ENCODE measurements at regions of chr9 and their contacts with region 1.

Region 1: GRCh38 chr9:137423004-137423874 is at the starts of genes EXD3 and NOXA1:
- DNase-seq: peak; percentile 91
- H3K4me3 Mint-ChIP-seq: peak within 1 kb of the TSS; percentile 88
- H3K27ac Mint-ChIP-seq: peak within 1 kb of the TSS; percentile 49
- H3K4me1 Mint-ChIP-seq: peaks cover 10% of the 10 kb centered on the region
- H3K27me3 Mint-ChIP-seq: peaks cover 4% of the 10 kb centered on the region
- total RNA-seq, gene EXD3: 6.8 and 8.0 TPM in 2 replicates
- total RNA-seq, gene NOXA1: 0.39 and 0.46 TPM in 2 replicates

Region 2: DNA sequence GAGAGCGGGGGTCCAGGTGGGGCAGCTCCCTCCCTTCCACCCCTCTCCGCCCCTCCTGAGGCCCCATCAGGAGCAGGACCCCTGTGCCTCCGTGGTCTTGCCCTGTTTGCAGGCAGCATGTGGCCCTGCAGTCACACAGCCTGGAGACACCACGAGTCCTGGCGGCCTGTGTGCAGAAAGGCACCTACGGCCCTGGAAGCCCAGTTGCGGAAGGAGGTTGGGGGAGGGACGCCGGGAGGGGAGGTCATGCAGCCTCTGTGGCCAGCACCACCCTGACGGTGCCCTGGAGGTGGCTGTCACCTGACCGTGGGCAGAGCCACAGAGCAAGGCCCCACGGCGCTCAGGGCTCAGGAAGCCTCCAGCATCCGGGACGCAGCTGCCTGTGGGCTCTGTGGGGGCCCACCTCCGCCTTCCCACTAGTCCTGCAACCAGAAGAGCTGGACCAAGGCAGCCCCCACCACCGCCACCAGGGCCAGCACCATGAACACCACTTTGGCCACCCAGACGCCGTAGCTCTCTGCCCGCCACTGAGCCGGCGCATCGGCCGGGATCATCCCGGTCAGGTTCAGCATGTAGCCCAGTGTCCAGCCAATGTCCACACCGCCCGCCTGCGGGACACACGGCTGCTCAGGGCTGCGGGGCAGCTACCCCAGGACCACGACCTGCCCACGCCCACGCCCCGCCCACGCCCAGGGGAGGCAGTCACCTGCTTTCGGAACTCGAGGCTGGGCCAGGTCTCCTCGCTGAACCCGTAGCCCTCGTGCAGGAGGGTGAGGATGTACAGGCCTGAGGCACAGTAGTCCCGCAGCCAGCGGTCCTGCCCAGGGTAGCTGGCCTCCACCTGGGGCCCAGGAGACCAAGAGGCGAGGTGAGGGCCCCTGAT is 11.5 kb after region 1 on chr9:
- intact Hi-C with region 1: no loop called
- DNase-seq: no peak
- H3K4me3 Mint-ChIP-seq: no peak overlapping the region
- H3K27ac Mint-ChIP-seq: no peak overlapping the region
- H3K4me1 Mint-ChIP-seq: no peaks in the 10 kb centered on the region
- H3K27me3 Mint-ChIP-seq: no peaks in the 10 kb centered on the region

Region 3: DNA sequence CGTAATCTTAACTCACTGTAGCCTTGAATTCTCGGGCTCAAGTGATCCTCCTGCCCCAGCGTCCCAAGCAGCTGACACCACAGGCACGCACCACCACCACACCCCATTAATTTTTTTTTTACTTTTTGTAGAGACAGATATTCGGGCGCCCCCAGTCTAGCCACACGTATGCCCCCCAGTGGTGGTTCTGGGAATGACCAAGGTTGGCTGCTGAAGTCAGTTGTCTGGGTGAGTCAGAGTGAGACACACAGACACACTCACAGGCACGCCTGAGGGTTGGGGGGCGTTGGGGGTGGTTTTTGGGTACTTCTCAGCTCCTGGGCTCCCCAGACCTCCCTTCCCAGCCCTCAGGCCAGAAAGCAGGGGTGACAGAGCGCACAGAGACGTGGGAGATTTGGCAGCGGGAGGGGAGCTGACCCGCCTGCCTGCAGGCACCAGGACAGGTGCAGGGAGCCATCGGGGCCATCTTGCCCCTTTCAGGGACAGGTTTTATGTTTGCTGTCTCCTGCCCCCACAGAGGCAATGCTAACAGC is 22.1 kb after region 1 on chr9:
- intact Hi-C with region 1: loop called (anchors 2 kb)
- DNase-seq: peak; percentile 80
- H3K4me3 Mint-ChIP-seq: no peak overlapping the region
- H3K27ac Mint-ChIP-seq: no peak overlapping the region
- H3K4me1 Mint-ChIP-seq: peaks cover 13% of the 10 kb centered on the region
- H3K27me3 Mint-ChIP-seq: peaks cover 11% of the 10 kb centered on the region

Region 4: DNA sequence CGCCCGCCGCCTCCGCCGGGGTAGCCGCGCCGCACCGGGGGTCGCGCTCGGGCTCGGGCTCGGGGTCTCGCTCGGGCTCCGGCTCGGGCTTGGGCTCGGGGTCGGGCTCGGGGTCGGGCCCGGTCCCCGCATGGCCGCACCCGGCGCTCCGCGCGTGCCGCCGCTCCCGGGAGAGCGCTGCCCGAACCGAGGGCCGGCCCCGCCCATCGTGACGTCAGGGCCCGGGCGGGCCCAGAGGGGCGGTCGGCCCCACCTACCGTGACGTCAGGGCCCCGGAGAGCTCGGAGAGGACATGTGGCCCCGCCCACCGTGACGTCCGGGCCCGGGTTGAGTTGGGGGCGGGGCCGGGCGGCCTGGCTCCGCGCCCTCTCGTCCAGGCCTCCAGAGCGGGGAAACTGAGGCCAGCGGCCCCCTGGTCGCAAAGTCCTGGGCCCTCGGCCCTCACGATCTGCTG is 35.9 kb after region 1 on chr9 and contains the start of gene NSMF:
- intact Hi-C with region 1: loop called (anchors 5 kb)
- DNase-seq: peak; percentile 93
- H3K4me3 Mint-ChIP-seq: peak within 1 kb of the TSS; percentile 13
- H3K27ac Mint-ChIP-seq: peak within 1 kb of the TSS; percentile 65
- H3K4me1 Mint-ChIP-seq: peaks cover 11% of the 10 kb centered on the region
- H3K27me3 Mint-ChIP-seq: no peaks in the 10 kb centered on the region
- total RNA-seq, gene NSMF: 56.1 and 57.6 TPM in 2 replicates

Region 5: GRCh38 chr9:137534256-137535117 is 111.2 kb after region 1 on chr9:
- intact Hi-C with region 1: loop called (anchors 10 kb)
- DNase-seq: no peak
- H3K4me3 Mint-ChIP-seq: no peak overlapping the region
- H3K27ac Mint-ChIP-seq: peak overlapping the region; percentile 36
- H3K4me1 Mint-ChIP-seq: peaks cover 26% of the 10 kb centered on the region
- H3K27me3 Mint-ChIP-seq: no peaks in the 10 kb centered on the region

Measured in activated T-helper 2 cell treated with anti-CD3 and anti-CD28 coated beads, Interferon-gamma antibody, Interleukin-2, Interleukin-4, amounts not matched to agents 10 μg/mL and 5 μg/mL and 100 μg/mL, durations not matched to agents 14 hours and 24 hours and 36 hours (primary cell).